Activated naive CD4-positive, alpha-beta T cell treated with anti-CD3 and anti-CD28 coated beads for 36 hours (primary cell): ENCODE measurements at regions of chr19 and their contacts with region 1.

Region 1: GRCh38 chr19:39412100-39412866 is at the start of gene PLEKHG2:
- DNase-seq: peak; percentile 98
- H3K4me3 Mint-ChIP-seq: peak within 1 kb of the TSS; percentile 85
- H3K27ac Mint-ChIP-seq: peak within 1 kb of the TSS; percentile 85
- H3K4me1 Mint-ChIP-seq: peaks cover 34% of the 10 kb centered on the region
- H3K27me3 Mint-ChIP-seq: peaks cover 2% of the 10 kb centered on the region
- total RNA-seq, gene PLEKHG2: 27.3 to 34.6 TPM

Region 2: DNA sequence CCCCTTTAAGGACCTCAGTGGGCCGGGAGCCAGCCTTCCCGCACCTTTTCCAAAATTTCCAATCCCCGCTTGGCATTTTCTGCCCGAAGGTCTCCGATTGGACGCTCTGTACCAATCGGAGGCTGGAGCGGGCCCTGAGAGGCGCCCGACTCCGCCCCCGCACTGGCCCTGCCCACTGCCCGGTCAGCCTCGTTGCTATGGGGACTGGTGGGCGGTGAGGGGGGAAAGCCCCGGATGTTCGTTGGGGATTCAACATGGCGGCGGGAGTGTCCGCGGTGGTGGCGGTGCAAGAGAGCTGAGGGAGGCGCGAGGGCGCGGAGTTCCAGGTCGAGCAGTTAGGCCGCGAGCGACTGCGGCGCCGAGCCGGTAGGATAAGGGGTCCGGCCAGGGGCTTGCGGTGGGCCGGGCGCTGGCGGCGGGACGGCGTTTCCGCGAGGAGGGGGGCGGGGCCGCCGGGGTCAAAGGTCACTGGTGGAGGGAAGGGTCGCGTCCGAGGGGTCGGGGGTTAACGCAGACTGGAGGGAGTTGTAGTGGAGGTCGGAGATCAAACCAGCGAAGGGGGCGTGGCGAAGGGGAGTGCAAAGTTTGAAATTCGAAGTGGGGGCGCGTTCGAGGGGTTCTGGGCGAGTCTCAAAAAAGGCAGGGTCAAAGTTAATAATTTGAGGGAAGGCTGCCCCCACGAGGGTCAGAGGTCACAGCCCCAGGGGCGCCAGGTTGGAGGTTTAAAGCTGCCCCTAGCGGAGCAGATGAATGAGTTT is 286.6 kb before region 1 on chr19 and contains the start of gene PAK4:
- CTCF ChIA-PET with region 1: no interaction called
- intact Hi-C with region 1: loop called (anchors 1 kb)
- DNase-seq: peak; percentile 99
- H3K4me3 Mint-ChIP-seq: peak within 1 kb of the TSS; percentile 92
- H3K27ac Mint-ChIP-seq: peak within 1 kb of the TSS; percentile 92
- H3K4me1 Mint-ChIP-seq: peaks cover 38% of the 10 kb centered on the region
- H3K27me3 Mint-ChIP-seq: peaks cover 2% of the 10 kb centered on the region
- total RNA-seq, gene PAK4: 16.9 to 18.1 TPM

Region 3: GRCh38 chr19:39264306-39265290 is 147.7 kb before region 1 on chr19:
- CTCF ChIA-PET with region 1: no interaction called
- intact Hi-C with region 1: no loop called
- DNase-seq: no peak
- H3K4me3 Mint-ChIP-seq: no peak overlapping the region
- H3K27ac Mint-ChIP-seq: no peak overlapping the region
- H3K4me1 Mint-ChIP-seq: peaks cover 13% of the 10 kb centered on the region
- H3K27me3 Mint-ChIP-seq: peaks cover 29% of the 10 kb centered on the region

Region 4: GRCh38 chr19:39335168-39335548 is 77.1 kb before region 1 on chr19:
- CTCF ChIA-PET with region 1: interaction called, 12 read pairs
- intact Hi-C with region 1: no loop called
- DNase-seq: peak; percentile 57
- H3K4me3 Mint-ChIP-seq: peak overlapping the region; percentile 95
- H3K27ac Mint-ChIP-seq: peak overlapping the region; percentile 99
- H3K4me1 Mint-ChIP-seq: peaks cover 65% of the 10 kb centered on the region
- H3K27me3 Mint-ChIP-seq: no peaks in the 10 kb centered on the region

Region 5: DNA sequence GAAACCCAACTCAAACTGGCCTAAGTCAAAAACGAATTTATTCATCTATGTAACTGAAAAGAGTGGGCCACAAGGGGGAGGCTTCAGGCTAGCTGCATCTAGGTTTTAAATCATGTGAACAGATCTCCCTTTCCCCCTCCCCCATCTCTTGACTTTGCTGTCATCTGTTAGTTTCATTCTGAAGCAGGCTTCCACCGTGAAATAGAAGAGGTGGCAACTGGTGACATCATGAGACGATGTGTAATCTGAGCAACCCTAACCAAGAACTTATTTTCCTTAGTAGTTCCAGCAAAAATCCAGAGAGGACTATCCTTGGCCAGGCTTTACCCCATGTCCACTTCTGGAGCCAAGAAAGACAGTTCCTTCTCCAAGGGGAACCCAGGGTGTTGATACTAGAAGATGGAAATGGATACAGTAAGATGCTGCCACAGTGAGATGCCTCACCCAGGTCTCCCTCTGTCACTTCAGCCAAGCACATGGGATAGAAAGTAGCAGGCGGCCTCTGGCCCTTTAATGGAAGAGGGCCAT is 60.7 kb before region 1 on chr19:
- CTCF ChIA-PET with region 1: interaction called, 7 read pairs
- intact Hi-C with region 1: loop called (anchors 1 kb)
- DNase-seq: peak; percentile 82
- H3K4me3 Mint-ChIP-seq: no peak overlapping the region
- H3K27ac Mint-ChIP-seq: peak overlapping the region; percentile 85
- H3K4me1 Mint-ChIP-seq: peaks cover 41% of the 10 kb centered on the region
- H3K27me3 Mint-ChIP-seq: no peaks in the 10 kb centered on the region

Region 6: GRCh38 chr19:39397360-39398296 is 14.7 kb before region 1 on chr19:
- CTCF ChIA-PET with region 1: interaction called, 97 read pairs
- intact Hi-C with region 1: loop called (anchors 1 kb)
- DNase-seq: peak; percentile 96
- H3K4me3 Mint-ChIP-seq: peak overlapping the region; percentile 34
- H3K27ac Mint-ChIP-seq: peak overlapping the region; percentile 91
- H3K4me1 Mint-ChIP-seq: peaks cover 63% of the 10 kb centered on the region
- H3K27me3 Mint-ChIP-seq: no peaks in the 10 kb centered on the region

Region 7: GRCh38 chr19:39445265-39446111 is 33.2 kb after region 1 on chr19 and contains the start of gene SUPT5H:
- CTCF ChIA-PET with region 1: no interaction called
- intact Hi-C with region 1: loop called (anchors 1 kb)
- DNase-seq: peak; percentile 99
- H3K4me3 Mint-ChIP-seq: peak within 1 kb of the TSS; percentile 99
- H3K27ac Mint-ChIP-seq: peak within 1 kb of the TSS; percentile 96
- H3K4me1 Mint-ChIP-seq: peaks cover 49% of the 10 kb centered on the region
- H3K27me3 Mint-ChIP-seq: no peaks in the 10 kb centered on the region
- total RNA-seq, gene SUPT5H: 129 to 139 TPM